HepG2 (cell line): ENCODE measurements at regions of chr6 and their contacts with region 1.

Region 1: GRCh38 chr6:44312901-44313788 is at the start of gene AARS2:
- DNase-seq: peak; percentile 87
- ATAC-seq: peak; percentile 96
- H3K4me3 ChIP-seq: peak within 1 kb of the TSS; percentile 92 to 97 (median 96)
- H3K27ac ChIP-seq: peak within 1 kb of the TSS; percentile 58
- H3K4me1 ChIP-seq: peaks cover 22% of the 10 kb centered on the region
- H3K27me3 ChIP-seq: peaks cover 0 to 17% of the 10 kb centered on the region in 2 experiments; a peak in 2 of 5 replicates
- CTCF ChIP-seq: peak; percentile 99
- EP300 ChIP-seq: peak; percentile 51 to 71; a peak in 2 of 4 replicates
- POLR2A ChIP-seq: peak; percentile 94 to 99
- RAD21 ChIP-seq: peak; percentile 69
- total RNA-seq, gene AARS2: 13.7 and 24.1 TPM in 2 replicates

Region 2: DNA sequence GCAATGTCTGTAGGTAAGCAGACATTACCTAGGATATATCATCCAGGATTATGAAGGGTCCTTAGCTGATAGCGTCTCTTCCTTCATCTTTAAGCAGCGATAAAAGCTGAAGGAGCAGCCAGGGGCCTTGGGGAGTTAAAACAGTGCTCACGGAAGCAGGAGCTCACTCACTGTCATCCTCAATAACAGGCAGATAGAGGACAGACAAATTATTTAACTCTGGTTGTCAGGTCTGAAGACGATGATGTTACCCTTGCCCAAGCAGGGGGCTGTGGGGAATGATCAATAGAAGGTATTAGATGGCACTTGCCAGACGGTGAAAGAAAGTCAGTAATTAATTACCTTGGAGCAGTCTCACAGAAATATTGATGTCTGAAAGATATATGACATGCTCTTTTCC is 16.7 kb after region 1 on chr6:
- CTCF ChIA-PET with region 1: no interaction called
- POLR2A ChIA-PET with region 1: no interaction called
- in situ Hi-C with region 1: no loop called
- intact Hi-C with region 1: loop called (anchors 1 kb)
- DNase-seq: no peak
- ATAC-seq: no peak
- H3K4me3 ChIP-seq: no peak overlapping the region
- H3K27ac ChIP-seq: no peak overlapping the region
- H3K4me1 ChIP-seq: no peaks in the 10 kb centered on the region
- H3K27me3 ChIP-seq: peaks cover 3 to 62% of the 10 kb centered on the region in 2 experiments
- CTCF ChIP-seq: no peak
- EP300 ChIP-seq: no peak
- POLR2A ChIP-seq: no peak
- RAD21 ChIP-seq: no peak

Region 3: GRCh38 chr6:44527181-44527580 is 214.0 kb after region 1 on chr6:
- CTCF ChIA-PET with region 1: no interaction called
- POLR2A ChIA-PET with region 1: no interaction called
- in situ Hi-C with region 1: no loop called
- intact Hi-C with region 1: no loop called
- DNase-seq: no peak
- ATAC-seq: no peak
- H3K4me3 ChIP-seq: no peak overlapping the region
- H3K27ac ChIP-seq: no peak overlapping the region
- H3K4me1 ChIP-seq: no peaks in the 10 kb centered on the region
- H3K27me3 ChIP-seq: peaks cover 4 to 56% of the 10 kb centered on the region in 2 experiments
- CTCF ChIP-seq: no peak
- EP300 ChIP-seq: no peak
- POLR2A ChIP-seq: no peak
- RAD21 ChIP-seq: no peak

Region 4: GRCh38 chr6:44735630-44735963 is 422.5 kb after region 1 on chr6:
- CTCF ChIA-PET with region 1: no interaction called
- POLR2A ChIA-PET with region 1: no interaction called
- in situ Hi-C with region 1: no loop called
- intact Hi-C with region 1: no loop called
- DNase-seq: no peak
- ATAC-seq: no peak
- H3K4me3 ChIP-seq: no peak overlapping the region
- H3K27ac ChIP-seq: no peak overlapping the region
- H3K4me1 ChIP-seq: peaks cover 15% of the 10 kb centered on the region
- H3K27me3 ChIP-seq: peaks cover 0 to 15% of the 10 kb centered on the region in 2 experiments; a peak in 4 of 5 replicates
- CTCF ChIP-seq: no peak
- EP300 ChIP-seq: no peak
- POLR2A ChIP-seq: no peak
- RAD21 ChIP-seq: no peak